ENCODE measurements at regions of chr18 and their contacts with region 1.

Region 1: DNA sequence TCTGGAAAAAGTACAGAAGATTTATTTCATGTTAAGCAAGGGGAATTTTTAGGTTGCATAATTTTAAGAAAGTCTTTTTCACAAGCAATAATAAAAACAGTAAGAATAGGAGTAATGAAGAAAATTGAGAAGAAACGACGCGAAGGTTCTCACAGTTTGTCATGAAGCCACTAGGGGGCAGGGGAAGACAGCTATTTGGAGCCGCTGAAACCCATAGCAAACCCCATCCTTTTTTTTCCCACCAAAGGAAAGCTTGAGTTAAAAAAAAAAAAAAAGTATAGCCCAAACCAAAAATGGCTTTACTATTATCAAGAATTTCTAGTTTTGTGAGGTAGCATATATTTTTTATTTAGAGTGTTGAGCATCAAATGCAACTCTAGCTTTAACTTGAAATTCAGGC is 300.9 kb downstream of the PHLPP1 start:
- DNase-seq: peak in 3 of 5 donors; percentile 59 to 87 (median 64)
- H3K4me3 ChIP-seq: no peak overlapping the region
- H3K27ac ChIP-seq: no peak overlapping the region
- H3K4me1 ChIP-seq: no peaks in the 10 kb centered on the region
- H3K27me3 ChIP-seq: no peaks in the 10 kb centered on the region
- CTCF ChIP-seq: peak; percentile 78

Region 2: DNA sequence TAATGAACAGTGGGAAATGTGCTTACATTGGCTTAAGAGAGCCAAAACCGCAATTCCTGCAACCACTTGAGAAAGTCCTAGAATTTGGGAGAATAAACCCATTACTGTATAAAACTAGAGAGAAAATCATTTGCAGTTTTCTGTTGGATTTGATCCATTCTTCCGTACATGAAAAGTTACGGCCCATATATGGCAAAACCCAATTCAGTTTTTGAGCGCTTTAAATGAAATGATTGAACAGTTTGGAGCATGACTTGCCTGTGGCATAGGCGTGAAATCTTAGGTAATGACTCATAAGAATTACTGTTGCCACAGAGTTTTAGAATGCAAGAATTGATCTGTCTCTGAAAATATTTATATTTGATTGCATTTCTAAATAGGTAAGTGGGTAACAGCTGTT is 248.9 kb before region 1 on chr18:
- intact Hi-C with region 1: no loop called
- DNase-seq: no peak
- H3K4me3 ChIP-seq: no peak overlapping the region
- H3K27ac ChIP-seq: no peak overlapping the region
- H3K4me1 ChIP-seq: no peaks in the 10 kb centered on the region
- H3K27me3 ChIP-seq: no peaks in the 10 kb centered on the region
- CTCF ChIP-seq: no peak

Region 3: GRCh38 chr18:63320046-63320689 is 303.9 kb after region 1 on chr18:
- intact Hi-C with region 1: loop called (anchors 10 kb)
- DNase-seq: peak; percentile 85 to 96 (median 91)
- H3K4me3 ChIP-seq: peak overlapping the region; percentile 61 to 81 (median 66)
- H3K27ac ChIP-seq: peak overlapping the region; percentile 64 to 68
- H3K4me1 ChIP-seq: peaks cover 0 to 10% (median 8%) of the 10 kb centered on the region in 3 donors
- H3K27me3 ChIP-seq: no peaks in the 10 kb centered on the region
- CTCF ChIP-seq: no peak

Region 4: GRCh38 chr18:63439334-63439733 is 423.1 kb after region 1 on chr18:
- intact Hi-C with region 1: loop called (anchors 10 kb)
- DNase-seq: peak in 4 of 5 donors; percentile 51 to 80 (median 72)
- H3K4me3 ChIP-seq: no peak overlapping the region
- H3K27ac ChIP-seq: no peak overlapping the region
- H3K4me1 ChIP-seq: no peaks in the 10 kb centered on the region
- H3K27me3 ChIP-seq: no peaks in the 10 kb centered on the region
- CTCF ChIP-seq: peak; percentile 83

Measured in kidney (tissue), 22 donors.